ENCODE measurements at regions of chr22 and their contacts with region 1.

Region 1: GRCh38 chr22:35150183-35151107 is 84.5 kb downstream of the ISX start:
- DNase-seq: peak; percentile 79
- ATAC-seq: peak; percentile 60
- H3K4me3 Mint-ChIP-seq: no peak overlapping the region
- H3K27ac Mint-ChIP-seq: no peak overlapping the region
- H3K4me1 Mint-ChIP-seq: peaks cover 4% of the 10 kb centered on the region
- H3K27me3 Mint-ChIP-seq: peaks cover 27% of the 10 kb centered on the region
- CTCF ChIP-seq: peak; percentile 78

Region 2: DNA sequence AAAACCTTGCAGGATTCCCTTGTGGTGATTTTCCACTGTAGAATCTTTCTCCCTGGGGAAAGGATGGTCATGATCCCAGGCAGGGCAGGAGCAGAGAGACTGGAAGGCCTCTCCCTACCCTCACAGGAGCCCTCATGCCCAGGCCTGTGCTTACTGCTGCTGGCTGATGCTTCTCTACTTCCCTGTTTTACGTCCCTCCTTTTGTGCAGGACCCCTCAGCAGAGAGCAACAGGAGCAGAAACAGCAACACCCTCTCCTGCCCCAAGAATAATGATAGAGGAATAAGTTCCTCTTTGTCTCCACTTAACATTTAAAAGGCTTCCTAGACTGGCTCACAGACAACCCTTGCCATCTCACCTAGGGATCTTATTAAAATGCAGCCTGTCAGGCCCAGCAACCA is 80.9 kb before region 1 on chr22:
- CTCF ChIA-PET with region 1: interaction called, 10 read pairs
- POLR2A ChIA-PET with region 1: no interaction called
- intact Hi-C with region 1: no loop called
- DNase-seq: no peak
- ATAC-seq: no peak
- H3K4me3 Mint-ChIP-seq: no peak overlapping the region
- H3K27ac Mint-ChIP-seq: no peak overlapping the region
- H3K4me1 Mint-ChIP-seq: no peaks in the 10 kb centered on the region
- H3K27me3 Mint-ChIP-seq: no peaks in the 10 kb centered on the region
- CTCF ChIP-seq: no peak

Region 3: GRCh38 chr22:35131525-35132000 is 18.9 kb before region 1 on chr22:
- CTCF ChIA-PET with region 1: interaction called, 11 read pairs
- POLR2A ChIA-PET with region 1: no interaction called
- intact Hi-C with region 1: no loop called
- DNase-seq: no peak
- ATAC-seq: no peak
- H3K4me3 Mint-ChIP-seq: no peak overlapping the region
- H3K27ac Mint-ChIP-seq: no peak overlapping the region
- H3K4me1 Mint-ChIP-seq: no peaks in the 10 kb centered on the region
- H3K27me3 Mint-ChIP-seq: peaks cover 25% of the 10 kb centered on the region
- CTCF ChIP-seq: no peak

Measured in activated CD8-positive, alpha-beta T cell treated with anti-CD3 and anti-CD28 coated beads for 36 hours (primary cell).